Naive thymus-derived CD4-positive, alpha-beta T cell (primary cell): ENCODE measurements at regions of chr1 and their contacts with region 1.

Region 1: GRCh38 chr1:87084244-87084836 is 169.9 kb downstream of the HS2ST1 start:
- DNase-seq: peak in 6 of 9 donors; percentile 11 to 59 (median 44)
- ATAC-seq: peak; percentile 65
- H3K4me3 ChIP-seq: no peak overlapping the region
- H3K4me3 Mint-ChIP-seq: no peak overlapping the region
- H3K27ac ChIP-seq: no peak overlapping the region
- H3K27ac Mint-ChIP-seq: no peak overlapping the region
- H3K4me1 ChIP-seq: no peaks in the 10 kb centered on the region
- H3K4me1 Mint-ChIP-seq: peaks cover 0 to 6% (median 4%) of the 10 kb centered on the region in 7 donors
- H3K27me3 ChIP-seq: no peaks in the 10 kb centered on the region
- H3K27me3 Mint-ChIP-seq: no peaks in the 10 kb centered on the region

Region 2: DNA sequence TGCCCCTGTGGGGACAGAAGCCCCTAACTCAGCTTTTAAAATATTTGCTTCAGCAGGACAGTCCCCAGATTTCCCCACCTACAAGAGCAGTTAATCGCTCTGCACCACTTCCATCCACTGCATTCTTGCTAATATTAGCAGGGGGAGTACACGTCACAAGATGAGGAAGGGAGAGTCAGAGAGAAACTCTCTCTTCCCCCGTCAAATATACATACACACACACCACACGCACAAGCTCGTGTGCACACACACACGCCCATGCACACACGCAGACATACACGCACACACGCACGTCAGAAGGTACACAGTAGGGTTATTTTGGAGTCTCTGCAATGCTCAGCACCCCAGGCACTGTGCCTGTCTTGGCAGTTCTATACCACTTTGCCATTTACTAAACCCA is 613.5 kb before region 1 on chr1:
- CTCF ChIA-PET with region 1: interaction called, 3 read pairs
- POLR2A ChIA-PET with region 1: no interaction called
- intact Hi-C with region 1: loop called in 1 of 2 experiments (anchors 2 kb)
- DNase-seq: no peak
- ATAC-seq: no peak
- H3K4me3 ChIP-seq: no peak overlapping the region
- H3K4me3 Mint-ChIP-seq: no peak overlapping the region
- H3K27ac ChIP-seq: no peak overlapping the region
- H3K27ac Mint-ChIP-seq: no peak overlapping the region
- H3K4me1 ChIP-seq: no peaks in the 10 kb centered on the region
- H3K4me1 Mint-ChIP-seq: peaks cover 0 to 3% (median 0%) of the 10 kb centered on the region in 7 donors
- H3K27me3 ChIP-seq: peaks cover 0 to 3% of the 10 kb centered on the region in 2 donors
- H3K27me3 Mint-ChIP-seq: peaks cover 7 to 35% (median 11%) of the 10 kb centered on the region in 5 donors

Region 3: GRCh38 chr1:86515597-86515996 is 568.7 kb before region 1 on chr1:
- CTCF ChIA-PET with region 1: no interaction called
- POLR2A ChIA-PET with region 1: no interaction called
- intact Hi-C with region 1: loop called in 1 of 2 experiments (anchors 5 kb)
- DNase-seq: no peak
- ATAC-seq: no peak
- H3K4me3 ChIP-seq: no peak overlapping the region
- H3K4me3 Mint-ChIP-seq: no peak overlapping the region
- H3K27ac ChIP-seq: no peak overlapping the region
- H3K27ac Mint-ChIP-seq: no peak overlapping the region
- H3K4me1 ChIP-seq: no peaks in the 10 kb centered on the region
- H3K4me1 Mint-ChIP-seq: no peaks in the 10 kb centered on the region
- H3K27me3 ChIP-seq: no peaks in the 10 kb centered on the region
- H3K27me3 Mint-ChIP-seq: no peaks in the 10 kb centered on the region

Region 4: GRCh38 chr1:86833461-86834215 is 250.7 kb before region 1 on chr1:
- CTCF ChIA-PET with region 1: interaction called, 44 read pairs
- POLR2A ChIA-PET with region 1: no interaction called
- intact Hi-C with region 1: loop called (anchors 1 kb)
- DNase-seq: peak; percentile 9 to 69 (median 60)
- ATAC-seq: peak; percentile 84
- H3K4me3 ChIP-seq: no peak overlapping the region
- H3K4me3 Mint-ChIP-seq: no peak overlapping the region
- H3K27ac ChIP-seq: no peak overlapping the region
- H3K27ac Mint-ChIP-seq: no peak overlapping the region
- H3K4me1 ChIP-seq: no peaks in the 10 kb centered on the region
- H3K4me1 Mint-ChIP-seq: peaks cover 0 to 7% (median 0%) of the 10 kb centered on the region in 7 donors
- H3K27me3 ChIP-seq: no peaks in the 10 kb centered on the region
- H3K27me3 Mint-ChIP-seq: peaks cover 0 to 7% (median 0%) of the 10 kb centered on the region in 5 donors

Region 5: DNA sequence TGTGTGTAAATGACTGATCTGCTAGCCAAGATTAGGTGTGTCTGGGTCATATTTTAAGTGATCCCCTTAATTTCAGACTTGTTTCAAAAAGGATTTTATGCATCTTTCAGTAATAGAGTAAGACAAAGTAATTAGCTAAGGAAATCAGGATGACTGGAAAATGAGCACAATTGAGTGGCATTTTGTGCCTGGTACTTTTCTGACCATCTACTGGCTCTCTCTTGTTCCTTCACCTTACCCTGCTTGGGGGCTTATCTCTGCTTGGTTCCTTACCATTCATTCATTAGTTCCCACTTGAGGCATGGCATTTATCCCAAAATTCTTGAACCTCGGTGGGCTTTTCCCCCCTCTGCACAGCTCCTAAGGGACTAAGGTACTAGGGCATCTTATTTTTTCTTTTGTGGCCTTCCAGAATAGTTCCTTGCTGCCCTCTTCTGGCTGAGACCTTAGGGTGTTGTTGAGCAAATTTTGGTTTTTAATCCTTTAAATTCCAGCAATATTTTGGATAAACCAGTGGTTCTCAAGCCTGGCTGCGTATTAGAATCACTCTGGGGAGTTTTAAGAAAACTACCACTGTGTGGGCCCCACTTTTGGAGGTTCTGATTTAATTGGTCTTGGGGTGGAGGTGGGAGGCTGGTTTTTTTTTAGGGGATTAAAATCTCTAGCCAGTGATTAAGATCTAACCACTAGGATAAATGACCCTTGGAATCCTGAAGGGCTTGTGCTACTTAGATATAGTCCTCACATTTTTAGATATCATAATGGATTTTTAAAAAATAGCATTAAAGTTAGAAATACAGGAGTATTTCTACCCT is 119.1 kb before region 1 on chr1:
- CTCF ChIA-PET with region 1: no interaction called
- POLR2A ChIA-PET with region 1: no interaction called
- intact Hi-C with region 1: loop called (anchors 2 to 5 kb)
- DNase-seq: peak in 6 of 9 donors; percentile 1 to 31 (median 15)
- ATAC-seq: peak; percentile 48
- H3K4me3 ChIP-seq: no peak overlapping the region
- H3K4me3 Mint-ChIP-seq: peak overlapping the region in 1 of 10 donors; percentile 36
- H3K27ac ChIP-seq: no peak overlapping the region
- H3K27ac Mint-ChIP-seq: peak overlapping the region in 3 of 9 donors; percentile 56 to 69 (median 59)
- H3K4me1 ChIP-seq: no peaks in the 10 kb centered on the region
- H3K4me1 Mint-ChIP-seq: peaks cover 0 to 5% (median 0%) of the 10 kb centered on the region in 7 donors
- H3K27me3 ChIP-seq: no peaks in the 10 kb centered on the region
- H3K27me3 Mint-ChIP-seq: no peaks in the 10 kb centered on the region

Region 6: DNA sequence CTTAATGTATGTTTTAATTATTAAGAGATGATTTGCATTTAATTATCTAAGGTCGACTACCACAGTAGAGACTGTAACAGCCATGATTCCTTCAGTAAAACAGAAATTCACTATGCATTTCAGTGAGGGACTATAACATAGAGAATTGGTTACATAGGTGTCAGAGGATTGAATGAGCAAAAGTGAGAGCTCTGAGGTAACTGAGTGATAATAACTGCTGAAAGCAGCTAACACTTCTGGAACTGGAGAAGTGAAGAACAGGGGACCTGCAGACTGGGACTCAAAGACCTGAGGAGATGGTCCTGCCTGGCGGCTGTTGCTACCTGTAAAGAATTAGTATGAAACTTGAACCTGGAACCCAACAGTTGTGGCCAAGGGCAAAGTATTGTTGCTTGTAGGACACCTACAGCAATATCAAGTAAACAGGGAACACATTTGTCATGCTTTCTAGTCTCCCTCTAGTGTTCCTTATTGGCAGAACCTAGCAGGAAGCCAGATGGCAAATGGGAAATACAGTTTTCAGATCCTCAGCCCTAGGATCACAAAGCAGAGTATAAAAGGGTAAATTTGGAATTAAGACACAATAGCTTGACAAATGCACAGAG is 59.3 kb before region 1 on chr1:
- CTCF ChIA-PET with region 1: interaction called, 3 read pairs
- POLR2A ChIA-PET with region 1: no interaction called
- intact Hi-C with region 1: loop called in 1 of 2 experiments (anchors 5 kb)
- DNase-seq: no peak
- ATAC-seq: peak; percentile 42
- H3K4me3 ChIP-seq: no peak overlapping the region
- H3K4me3 Mint-ChIP-seq: no peak overlapping the region
- H3K27ac ChIP-seq: no peak overlapping the region
- H3K27ac Mint-ChIP-seq: peak overlapping the region in 1 of 9 donors; percentile 11
- H3K4me1 ChIP-seq: no peaks in the 10 kb centered on the region
- H3K4me1 Mint-ChIP-seq: peaks cover 2 to 17% (median 8%) of the 10 kb centered on the region in 7 donors
- H3K27me3 ChIP-seq: no peaks in the 10 kb centered on the region
- H3K27me3 Mint-ChIP-seq: no peaks in the 10 kb centered on the region

Region 7: GRCh38 chr1:87045761-87046304 is 38.5 kb before region 1 on chr1:
- CTCF ChIA-PET with region 1: no interaction called
- POLR2A ChIA-PET with region 1: no interaction called
- intact Hi-C with region 1: loop called (anchors 2 to 5 kb)
- DNase-seq: peak; percentile 7 to 91 (median 85)
- ATAC-seq: peak; percentile 82
- H3K4me3 ChIP-seq: no peak overlapping the region
- H3K4me3 Mint-ChIP-seq: peak overlapping the region; percentile 31 to 87 (median 64)
- H3K27ac ChIP-seq: peak overlapping the region; percentile 58
- H3K27ac Mint-ChIP-seq: peak overlapping the region; percentile 52 to 100 (median 94)
- H3K4me1 ChIP-seq: peaks cover 10 to 21% of the 10 kb centered on the region in 2 donors
- H3K4me1 Mint-ChIP-seq: peaks cover 24 to 72% (median 60%) of the 10 kb centered on the region in 7 donors
- H3K27me3 ChIP-seq: no peaks in the 10 kb centered on the region
- H3K27me3 Mint-ChIP-seq: no peaks in the 10 kb centered on the region